Testis (tissue), 5 donors: ENCODE measurements at regions of chr11 and their contacts with region 1.

Region 1: DNA sequence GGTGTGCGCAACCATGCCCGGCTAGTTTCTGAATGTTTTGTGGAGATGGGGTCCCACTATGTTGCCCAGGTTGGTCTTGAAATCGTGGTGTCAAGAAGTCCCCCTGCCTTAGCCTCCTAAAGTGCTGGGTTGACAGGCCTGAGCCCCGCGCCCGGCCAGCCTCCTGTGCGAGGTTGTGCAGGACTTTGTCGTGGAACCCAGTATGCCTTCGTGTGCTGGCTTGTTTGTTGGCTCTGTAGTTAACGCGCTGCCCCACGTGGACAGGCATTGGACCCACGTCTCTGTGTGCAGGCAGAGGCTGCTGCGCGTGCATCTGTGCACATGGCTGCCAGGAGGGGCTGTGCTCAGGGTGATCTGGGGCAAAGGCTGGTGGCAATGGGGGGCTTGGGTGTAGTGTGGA is 33.9 kb upstream of the ZNF195 start:
- DNase-seq: no peak
- H3K4me3 ChIP-seq: no peak overlapping the region
- H3K27ac ChIP-seq: no peak overlapping the region
- H3K4me1 ChIP-seq: no peaks in the 10 kb centered on the region
- H3K27me3 ChIP-seq: no peaks in the 10 kb centered on the region
- CTCF ChIP-seq: no peak
- POLR2A ChIP-seq: no peak

Region 2: DNA sequence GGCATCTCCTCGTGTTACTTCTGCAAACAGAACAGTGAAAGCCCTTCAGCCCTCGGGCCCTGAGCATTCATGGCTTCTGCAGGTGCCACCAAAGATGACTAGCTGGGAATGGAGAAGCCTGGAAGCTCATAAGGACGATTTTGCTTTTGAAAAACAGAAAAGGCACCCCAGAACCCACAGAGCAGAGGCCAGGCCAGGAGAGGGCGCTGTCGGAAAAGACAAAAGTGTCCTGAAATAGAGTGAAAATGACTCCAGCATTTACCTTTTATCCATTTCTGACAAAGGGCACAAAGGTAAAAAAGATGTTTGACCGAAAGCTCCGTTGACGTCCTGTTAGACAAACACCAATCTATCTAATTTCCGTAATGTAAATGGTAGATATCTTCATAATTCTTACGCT is 71.5 kb before region 1 on chr11:
- intact Hi-C with region 1: loop called (anchors 10 kb)
- DNase-seq: peak; percentile 68
- H3K4me3 ChIP-seq: no peak overlapping the region
- H3K27ac ChIP-seq: no peak overlapping the region
- H3K4me1 ChIP-seq: no peaks in the 10 kb centered on the region
- H3K27me3 ChIP-seq: no peaks in the 10 kb centered on the region
- CTCF ChIP-seq: peak; percentile 22 to 49 (median 45)
- POLR2A ChIP-seq: no peak